A549 (cell line): ENCODE measurements at regions of chr5 and their contacts with region 1.

Region 1: DNA sequence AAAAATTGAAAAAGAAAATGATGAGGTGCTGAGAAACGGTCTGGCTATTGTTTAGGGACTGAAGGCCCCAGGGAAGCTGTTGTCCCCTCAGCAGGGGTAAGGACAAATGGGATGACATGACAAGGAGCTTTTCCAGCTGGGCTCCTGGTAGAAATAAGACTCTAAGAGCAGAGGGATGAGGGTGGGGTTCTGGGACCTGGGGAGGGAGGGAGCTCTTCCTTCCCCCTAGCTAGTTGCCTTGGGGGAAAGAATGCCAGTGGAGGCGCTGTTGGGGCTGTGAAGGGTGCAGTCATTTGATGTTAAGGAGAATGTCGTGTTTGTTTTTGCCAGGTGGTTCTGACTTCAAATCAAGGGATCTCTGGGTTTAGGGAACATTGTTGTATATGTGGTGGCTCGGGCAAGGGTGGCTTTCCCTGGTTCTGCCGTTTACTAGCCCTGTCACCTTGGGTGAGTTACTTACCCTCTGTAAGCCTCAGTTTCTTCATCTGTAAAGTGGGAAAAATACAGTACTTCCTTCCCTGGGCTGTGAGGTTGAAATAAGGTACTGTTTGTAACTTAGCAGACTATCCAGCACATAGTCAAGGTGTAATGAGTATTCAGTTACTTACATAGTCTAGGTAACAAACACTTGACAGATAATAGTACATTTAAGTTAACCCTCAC is 47.8 kb downstream of the WWC1 start:
- DNase-seq: no peak
- ATAC-seq: no peak
- H3K4me3 ChIP-seq: no peak overlapping the region
- H3K27ac ChIP-seq: peak overlapping the region in 1 of 2 experiments; percentile 50; a peak in 3 of 6 replicates
- H3K4me1 ChIP-seq: peaks cover 68% of the 10 kb centered on the region
- CTCF ChIP-seq: no peak
- EP300 ChIP-seq: no peak
- POLR2A ChIP-seq: no peak
- RAD21 ChIP-seq: no peak

Region 2: DNA sequence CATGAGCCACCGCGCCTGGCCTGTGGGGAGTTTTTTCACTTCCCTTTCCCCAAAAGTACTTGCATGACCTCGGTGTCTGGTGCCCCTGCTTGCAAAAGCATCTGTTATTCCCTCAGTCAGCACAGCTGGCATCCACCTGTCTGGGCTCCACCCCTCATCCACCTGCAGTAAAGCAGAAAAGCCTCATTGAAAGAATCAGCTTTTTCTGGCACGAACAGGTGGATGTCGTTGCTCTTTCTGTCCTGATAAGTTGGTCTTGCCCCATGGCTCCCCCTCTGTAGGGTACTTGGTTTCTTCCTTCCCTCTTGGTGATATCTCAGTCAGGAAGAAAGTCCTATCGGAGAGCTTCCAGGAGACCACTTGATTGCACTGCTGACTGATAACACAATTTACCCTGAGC is 10.4 kb before region 1 on chr5:
- CTCF ChIA-PET with region 1: interaction called, 24 read pairs
- POLR2A ChIA-PET with region 1: no interaction called
- DNase-seq: peak; percentile 71 to 89
- ATAC-seq: peak; percentile 59 to 67
- H3K4me3 ChIP-seq: peak overlapping the region; percentile 20; the same call in 1 of the 3 replicates
- H3K27ac ChIP-seq: peak overlapping the region; percentile 98 to 99
- H3K4me1 ChIP-seq: peaks cover 98% of the 10 kb centered on the region
- CTCF ChIP-seq: no peak
- EP300 ChIP-seq: no peak
- POLR2A ChIP-seq: no peak
- RAD21 ChIP-seq: no peak

Region 3: GRCh38 chr5:168578006-168578405 is 238.8 kb after region 1 on chr5:
- CTCF ChIA-PET with region 1: no interaction called
- POLR2A ChIA-PET with region 1: no interaction called
- DNase-seq: peak in 1 of 2 experiments; percentile 11
- ATAC-seq: no peak
- H3K4me3 ChIP-seq: peak overlapping the region; percentile 84
- H3K27ac ChIP-seq: peak overlapping the region; percentile 85 to 96
- H3K4me1 ChIP-seq: peaks cover 19% of the 10 kb centered on the region; the same call in 2 of the 3 replicates
- CTCF ChIP-seq: no peak
- EP300 ChIP-seq: no peak
- POLR2A ChIP-seq: no peak
- RAD21 ChIP-seq: no peak